ENCODE measurements at regions of chr12 and their contacts with region 1.

Region 1: GRCh38 chr12:62409068-62409467 is 57.6 kb upstream of the MON2 start:
- DNase-seq: no peak
- H3K4me3 ChIP-seq: no peak overlapping the region
- H3K27me3 ChIP-seq: no peaks in the 10 kb centered on the region
- CTCF ChIP-seq: no peak

Region 2: DNA sequence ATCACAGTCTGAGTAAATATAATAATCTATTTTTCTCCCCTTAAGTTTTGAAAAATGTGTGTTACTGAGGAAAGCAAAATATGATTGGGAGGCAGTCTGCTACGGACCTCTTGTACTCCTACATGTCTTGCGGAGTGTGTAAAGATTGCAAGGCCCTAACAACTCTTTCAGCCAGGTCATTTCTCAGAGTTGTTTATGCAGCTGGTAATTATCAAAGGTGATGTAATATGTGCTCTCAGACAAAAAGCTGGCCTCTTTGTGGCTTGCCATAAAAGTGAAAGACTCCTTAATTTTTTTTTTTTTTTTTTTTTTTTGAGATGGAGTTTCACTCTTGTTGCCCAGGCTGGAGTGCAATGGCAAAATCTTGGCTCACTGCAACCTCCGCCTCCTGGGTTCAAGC is 17.0 kb after region 1 on chr12:
- CTCF ChIA-PET with region 1: interaction called, 10 read pairs
- POLR2A ChIA-PET with region 1: no interaction called
- DNase-seq: no peak
- H3K4me3 ChIP-seq: no peak overlapping the region
- H3K27me3 ChIP-seq: peaks cover 4% of the 10 kb centered on the region
- CTCF ChIP-seq: no peak